ENCODE measurements at regions of chr10 and their contacts with region 1.

Region 1: DNA sequence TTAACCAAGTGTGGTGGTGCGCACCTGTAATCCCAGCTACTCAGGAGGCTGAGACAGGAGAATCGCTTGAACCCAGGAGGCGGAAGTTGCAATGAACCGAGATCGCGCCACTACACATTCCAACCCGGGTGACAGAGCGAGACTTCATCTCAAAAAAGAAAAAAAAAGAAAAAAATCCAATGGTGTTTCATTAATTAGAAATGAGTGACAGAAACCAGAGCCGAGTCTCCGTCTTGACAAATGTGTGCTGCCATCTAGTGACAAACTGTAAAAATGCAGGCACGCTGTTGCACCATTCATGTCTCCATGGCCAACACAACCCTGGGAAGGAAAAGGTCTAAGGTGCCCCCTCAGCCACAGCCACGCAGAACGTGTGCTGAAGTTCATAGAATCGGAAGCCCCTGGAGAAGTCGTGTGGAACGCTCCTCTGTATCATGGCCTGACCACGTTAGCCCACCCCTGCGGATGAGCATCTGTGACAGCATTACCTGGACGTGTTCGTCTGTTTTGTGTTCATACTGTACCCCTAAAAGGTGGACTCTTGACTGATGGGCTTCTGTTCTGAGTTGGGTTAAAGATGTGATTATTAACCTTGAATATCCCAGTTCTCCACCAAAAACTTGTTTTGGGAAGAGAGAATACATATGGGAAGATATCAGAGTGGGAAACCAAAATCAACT is 94.9 kb downstream of the LYZL2 start:
- DNase-seq: peak; percentile 82
- H3K4me3 Mint-ChIP-seq: no peak overlapping the region
- H3K27ac Mint-ChIP-seq: no peak overlapping the region
- H3K4me1 Mint-ChIP-seq: peaks cover 41% of the 10 kb centered on the region
- H3K27me3 Mint-ChIP-seq: peaks cover 4% of the 10 kb centered on the region

Region 2: GRCh38 chr10:30591249-30591670 is 56.7 kb after region 1 on chr10:
- CTCF ChIA-PET with region 1: interaction called, 16 read pairs
- DNase-seq: peak; percentile 55
- H3K4me3 Mint-ChIP-seq: no peak overlapping the region
- H3K27ac Mint-ChIP-seq: no peak overlapping the region
- H3K4me1 Mint-ChIP-seq: no peaks in the 10 kb centered on the region
- H3K27me3 Mint-ChIP-seq: peaks cover 46% of the 10 kb centered on the region

Measured in activated naive CD4-positive, alpha-beta T cell treated with anti-CD3 and anti-CD28 coated beads, Interleukin-2, amount 10 ng/mL, durations not matched to agents 7 days and 5 days (primary cell).